ENCODE measurements at regions of chr3 and their contacts with region 1.

Region 1: DNA sequence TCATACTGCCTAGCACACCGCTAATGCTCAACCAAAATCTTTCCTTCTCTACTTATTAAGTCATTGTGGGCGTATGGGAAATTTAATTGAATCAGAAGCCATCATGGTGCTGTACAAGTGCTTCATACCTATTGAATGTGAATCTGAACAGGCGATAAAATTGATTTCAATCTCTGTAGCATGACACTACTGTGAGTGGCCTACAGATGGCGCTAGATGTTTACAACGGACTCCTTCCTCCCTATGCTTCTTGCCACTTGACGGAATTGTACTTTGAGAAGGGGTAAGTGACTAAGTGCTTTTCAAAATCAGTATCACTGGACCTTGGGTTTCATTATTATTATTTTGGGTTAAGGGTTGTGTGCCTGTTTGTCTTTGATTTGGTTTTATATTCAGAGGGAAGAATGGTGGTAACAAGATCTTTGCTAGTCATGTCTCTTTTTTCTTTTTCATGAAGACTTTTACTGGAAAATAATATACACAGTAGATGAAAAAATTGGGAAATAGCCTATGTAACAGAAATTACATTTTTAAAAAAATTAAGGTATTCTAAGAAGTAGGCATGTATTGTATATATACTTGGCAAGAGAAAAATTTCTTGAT is 35.4 kb downstream of the ACP3 start:
- DNase-seq: peak; percentile 81
- ATAC-seq: peak; percentile 92
- H3K4me3 Mint-ChIP-seq: no peak overlapping the region
- H3K27ac Mint-ChIP-seq: no peak overlapping the region
- H3K4me1 Mint-ChIP-seq: peaks cover 8% of the 10 kb centered on the region
- H3K27me3 Mint-ChIP-seq: peaks cover 3% of the 10 kb centered on the region

Region 2: DNA sequence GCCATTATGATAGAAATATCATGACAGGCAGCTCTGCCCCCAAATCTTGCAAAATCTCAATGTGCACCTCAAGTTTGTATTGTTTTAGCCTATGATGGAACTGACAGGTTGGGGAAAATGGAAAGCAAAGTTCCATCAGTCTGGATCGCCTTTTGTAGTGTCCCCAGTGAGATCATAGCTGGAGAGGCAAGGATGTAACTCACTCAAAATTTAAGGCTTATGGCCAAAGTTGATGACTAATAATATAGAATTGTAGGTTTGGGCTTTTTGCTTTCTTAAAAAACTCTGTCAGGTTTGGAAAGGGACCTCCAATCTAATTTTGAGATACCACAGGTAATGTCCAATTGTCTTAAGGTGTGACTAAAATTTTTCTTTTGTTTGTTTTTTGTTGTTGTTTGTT is 36.8 kb before region 1 on chr3:
- CTCF ChIA-PET with region 1: no interaction called
- POLR2A ChIA-PET with region 1: interaction called, 11 read pairs
- intact Hi-C with region 1: no loop called
- DNase-seq: no peak
- ATAC-seq: no peak
- H3K4me3 Mint-ChIP-seq: no peak overlapping the region
- H3K27ac Mint-ChIP-seq: no peak overlapping the region
- H3K4me1 Mint-ChIP-seq: no peaks in the 10 kb centered on the region
- H3K27me3 Mint-ChIP-seq: peaks cover 5% of the 10 kb centered on the region

Region 3: GRCh38 chr3:132486086-132486485 is 133.4 kb after region 1 on chr3:
- CTCF ChIA-PET with region 1: interaction called, 3 read pairs
- POLR2A ChIA-PET with region 1: no interaction called
- intact Hi-C with region 1: loop called in 1 of 2 experiments (anchors 10 kb)
- DNase-seq: no peak
- ATAC-seq: no peak
- H3K4me3 Mint-ChIP-seq: no peak overlapping the region
- H3K27ac Mint-ChIP-seq: peak overlapping the region; percentile 26
- H3K4me1 Mint-ChIP-seq: peaks cover 3% of the 10 kb centered on the region
- H3K27me3 Mint-ChIP-seq: no peaks in the 10 kb centered on the region